ENCODE measurements at regions of chrX and their contacts with region 1.

Region 1: GRCh38 chrX:96684339-96685209 is at the start of gene DIAPH2:
- DNase-seq: peak; percentile 78
- ATAC-seq: peak; percentile 96
- H3K4me3 ChIP-seq: peak within 1 kb of the TSS; percentile 67 to 79 (median 76)
- H3K27ac ChIP-seq: peak within 1 kb of the TSS; percentile 59
- H3K4me1 ChIP-seq: peaks cover 13% of the 10 kb centered on the region; the same call in 1 of the 2 replicates
- H3K27me3 ChIP-seq: no peaks in the 10 kb centered on the region; a peak in 1 of 5 replicates
- CTCF ChIP-seq: no peak
- EP300 ChIP-seq: no peak
- POLR2A ChIP-seq: 0 out of 4 replicates have a peak, but pooled peaks have one; percentile 26 to 34
- RAD21 ChIP-seq: peak; percentile 13; the same call in 1 of the 2 replicates
- total RNA-seq, gene DIAPH2: 8.3 and 8.5 TPM in 2 replicates

Region 2: DNA sequence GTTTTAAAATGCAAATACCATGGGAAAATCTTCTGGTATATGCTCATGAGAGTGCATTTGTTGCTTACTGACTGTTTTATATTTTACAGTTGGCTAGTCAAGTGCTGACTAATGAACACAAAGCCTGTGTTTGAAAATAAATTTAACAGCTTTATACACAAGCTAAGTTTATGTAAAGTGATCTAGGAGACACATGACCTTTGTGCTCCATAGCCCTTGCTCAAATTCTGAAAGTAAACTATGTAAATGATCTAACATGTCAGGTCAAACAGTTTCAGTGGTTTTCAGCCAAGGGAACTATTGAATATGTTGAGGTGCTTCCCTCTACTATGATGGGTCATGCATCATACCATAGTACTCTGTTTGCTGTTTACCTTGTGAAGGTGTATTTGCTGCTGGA is 36.8 kb after region 1 on chrX:
- CTCF ChIA-PET with region 1: no interaction called
- POLR2A ChIA-PET with region 1: no interaction called
- in situ Hi-C with region 1: no loop called
- intact Hi-C with region 1: loop called (anchors 5 kb)
- DNase-seq: peak; percentile 65
- ATAC-seq: peak; percentile 88
- H3K4me3 ChIP-seq: no peak overlapping the region
- H3K27ac ChIP-seq: no peak overlapping the region
- H3K4me1 ChIP-seq: peaks cover 19% of the 10 kb centered on the region
- H3K27me3 ChIP-seq: no peaks in the 10 kb centered on the region
- CTCF ChIP-seq: no peak
- EP300 ChIP-seq: 0 out of 4 replicates have a peak, but pooled peaks of 1 of the 2 experiments have one; percentile 19
- POLR2A ChIP-seq: no peak
- RAD21 ChIP-seq: no peak

Region 3: GRCh38 chrX:96971812-96972211 is 287.2 kb after region 1 on chrX:
- CTCF ChIA-PET with region 1: no interaction called
- POLR2A ChIA-PET with region 1: no interaction called
- in situ Hi-C with region 1: no loop called
- intact Hi-C with region 1: no loop called
- DNase-seq: no peak
- ATAC-seq: no peak
- H3K4me3 ChIP-seq: no peak overlapping the region
- H3K27ac ChIP-seq: no peak overlapping the region
- H3K4me1 ChIP-seq: no peaks in the 10 kb centered on the region
- H3K27me3 ChIP-seq: no peaks in the 10 kb centered on the region
- CTCF ChIP-seq: no peak
- EP300 ChIP-seq: no peak
- POLR2A ChIP-seq: no peak
- RAD21 ChIP-seq: no peak

Region 4: GRCh38 chrX:96987228-96987627 is 302.7 kb after region 1 on chrX:
- CTCF ChIA-PET with region 1: no interaction called
- POLR2A ChIA-PET with region 1: no interaction called
- in situ Hi-C with region 1: no loop called
- intact Hi-C with region 1: no loop called
- DNase-seq: no peak
- ATAC-seq: no peak
- H3K4me3 ChIP-seq: no peak overlapping the region
- H3K27ac ChIP-seq: no peak overlapping the region
- H3K4me1 ChIP-seq: no peaks in the 10 kb centered on the region
- H3K27me3 ChIP-seq: no peaks in the 10 kb centered on the region
- CTCF ChIP-seq: no peak
- EP300 ChIP-seq: no peak
- POLR2A ChIP-seq: no peak
- RAD21 ChIP-seq: no peak

Measured in HepG2 (cell line).